CD8-positive, alpha-beta T cell (primary cell): ENCODE measurements at regions of chr17 and their contacts with region 1.

Region 1: GRCh38 chr17:43360739-43361505 is 37.9 kb upstream of the ARL4D start:
- DNase-seq: peak; percentile 80 to 98 (median 94)
- ATAC-seq: peak; percentile 76
- H3K4me3 ChIP-seq: peak overlapping the region; percentile 60 to 64
- H3K4me3 Mint-ChIP-seq: peak overlapping the region; percentile 86
- H3K27ac ChIP-seq: peak overlapping the region; percentile 92 to 100
- H3K27ac Mint-ChIP-seq: peak overlapping the region; percentile 100
- H3K4me1 ChIP-seq: peaks cover 13% of the 10 kb centered on the region
- H3K4me1 Mint-ChIP-seq: peaks cover 35% of the 10 kb centered on the region
- H3K27me3 ChIP-seq: no peaks in the 10 kb centered on the region
- H3K27me3 Mint-ChIP-seq: no peaks in the 10 kb centered on the region
- CTCF ChIP-seq: no peak

Region 2: DNA sequence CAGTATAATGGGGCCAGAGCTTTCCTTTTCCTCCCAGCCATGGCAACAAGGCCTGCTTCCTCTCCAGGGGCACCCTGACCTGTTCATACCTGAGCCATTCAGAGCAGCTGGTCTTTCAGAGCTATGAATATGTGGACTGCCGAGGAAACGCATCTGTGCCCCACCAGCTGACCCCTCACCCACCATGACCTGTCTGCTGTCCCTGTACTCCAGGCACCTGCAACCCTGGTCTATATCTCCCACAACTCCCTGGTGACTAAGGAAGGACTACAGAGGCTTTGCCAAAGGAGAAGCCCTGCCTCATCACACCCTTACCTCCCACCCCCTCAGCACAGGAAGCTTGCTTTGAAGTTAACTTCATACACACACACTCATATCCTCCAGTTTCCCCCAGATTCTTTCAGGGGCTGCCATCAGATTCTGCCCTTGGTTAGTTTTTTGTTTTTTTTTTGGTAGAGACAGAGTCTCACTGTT is 143.3 kb before region 1 on chr17:
- CTCF ChIA-PET with region 1: no interaction called
- POLR2A ChIA-PET with region 1: interaction called, 16 read pairs
- intact Hi-C with region 1: no loop called
- DNase-seq: peak in 3 of 9 experiments; percentile 10 to 30 (median 27)
- ATAC-seq: peak; percentile 80
- H3K4me3 ChIP-seq: no peak overlapping the region
- H3K4me3 Mint-ChIP-seq: no peak overlapping the region
- H3K27ac ChIP-seq: peak overlapping the region in 1 of 2 experiments; percentile 14
- H3K27ac Mint-ChIP-seq: peak overlapping the region; percentile 87
- H3K4me1 ChIP-seq: peaks cover 25% of the 10 kb centered on the region
- H3K4me1 Mint-ChIP-seq: peaks cover 40% of the 10 kb centered on the region
- H3K27me3 ChIP-seq: no peaks in the 10 kb centered on the region
- H3K27me3 Mint-ChIP-seq: no peaks in the 10 kb centered on the region
- CTCF ChIP-seq: no peak

Region 3: DNA sequence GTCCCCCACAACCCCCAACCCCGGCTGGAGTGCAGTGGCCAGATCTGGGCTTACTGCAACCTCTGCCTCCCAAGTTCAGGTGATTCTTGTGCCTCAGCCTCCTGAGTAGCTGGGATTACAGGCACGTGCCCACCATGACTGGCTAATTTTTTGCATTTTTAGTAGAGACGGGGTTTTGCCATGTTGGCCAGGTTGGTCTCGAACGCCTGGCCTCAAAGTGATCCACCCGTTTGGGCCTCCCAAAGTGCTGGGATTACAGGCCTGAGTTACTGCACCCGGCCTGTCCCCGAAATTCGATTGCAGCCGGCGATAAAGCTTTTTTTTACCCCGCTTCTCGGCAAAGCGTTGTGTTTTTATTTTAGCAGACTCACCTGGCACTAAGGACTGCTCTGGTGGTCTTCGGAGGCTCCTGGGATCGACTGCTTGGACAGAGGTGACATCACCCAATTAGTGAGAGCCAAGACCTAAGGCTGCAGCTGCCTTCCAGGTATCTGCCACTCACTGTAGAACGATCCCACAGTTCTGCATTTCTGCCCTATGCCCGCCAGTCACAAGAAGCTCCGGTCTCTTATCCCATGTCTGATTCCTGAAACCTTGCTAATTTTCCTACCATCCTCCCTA is 44.3 kb before region 1 on chr17:
- CTCF ChIA-PET with region 1: no interaction called
- POLR2A ChIA-PET with region 1: interaction called, 126 read pairs
- intact Hi-C with region 1: loop called in 1 of 2 experiments (anchors 1 kb)
- DNase-seq: peak in 5 of 9 experiments; percentile 14 to 59 (median 49)
- ATAC-seq: no peak
- H3K4me3 ChIP-seq: no peak overlapping the region
- H3K4me3 Mint-ChIP-seq: peak overlapping the region; percentile 6
- H3K27ac ChIP-seq: no peak overlapping the region
- H3K27ac Mint-ChIP-seq: peak overlapping the region; percentile 41
- H3K4me1 ChIP-seq: no peaks in the 10 kb centered on the region
- H3K4me1 Mint-ChIP-seq: peaks cover 15% of the 10 kb centered on the region
- H3K27me3 ChIP-seq: no peaks in the 10 kb centered on the region
- H3K27me3 Mint-ChIP-seq: no peaks in the 10 kb centered on the region
- CTCF ChIP-seq: no peak

Region 4: DNA sequence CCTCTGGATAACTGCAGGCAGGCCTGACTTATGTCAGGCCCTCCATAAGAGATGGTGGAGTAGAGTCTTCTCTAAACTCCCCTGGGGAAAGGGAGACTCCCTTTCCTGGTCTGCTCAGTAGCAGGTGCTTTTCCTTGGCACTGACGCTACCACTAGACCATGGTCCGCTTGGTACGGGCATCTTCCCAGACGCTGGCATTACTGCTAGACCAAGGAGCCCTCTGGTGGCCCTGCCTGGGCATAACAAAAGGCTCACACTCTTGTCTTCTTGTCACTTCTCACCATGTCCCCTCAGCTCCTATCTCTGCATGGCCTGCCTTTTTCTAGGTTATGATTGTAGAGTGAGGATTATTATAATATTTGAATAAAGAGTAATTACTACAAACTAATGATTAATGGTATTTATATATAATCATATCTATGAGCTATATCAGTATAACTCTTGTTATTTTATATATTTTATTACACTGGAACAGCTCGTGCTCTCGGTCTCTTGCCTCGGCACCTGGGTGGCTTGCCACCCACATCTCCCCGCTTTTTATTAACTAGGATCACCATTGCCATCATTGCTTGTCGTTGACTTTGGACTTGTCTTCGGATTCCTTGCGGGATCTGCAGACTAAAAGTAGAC is 21.9 kb before region 1 on chr17:
- CTCF ChIA-PET with region 1: interaction called, 28 read pairs
- POLR2A ChIA-PET with region 1: interaction called, 12 read pairs
- intact Hi-C with region 1: no loop called
- DNase-seq: peak; percentile 32 to 78 (median 62)
- ATAC-seq: peak; percentile 36
- H3K4me3 ChIP-seq: no peak overlapping the region
- H3K4me3 Mint-ChIP-seq: no peak overlapping the region
- H3K27ac ChIP-seq: no peak overlapping the region
- H3K27ac Mint-ChIP-seq: no peak overlapping the region
- H3K4me1 ChIP-seq: peaks cover 6% of the 10 kb centered on the region
- H3K4me1 Mint-ChIP-seq: peaks cover 8% of the 10 kb centered on the region
- H3K27me3 ChIP-seq: no peaks in the 10 kb centered on the region
- H3K27me3 Mint-ChIP-seq: no peaks in the 10 kb centered on the region
- CTCF ChIP-seq: peak; percentile 69

Region 5: GRCh38 chr17:43393944-43394482 is 33.1 kb after region 1 on chr17:
- CTCF ChIA-PET with region 1: interaction called, 17 read pairs
- POLR2A ChIA-PET with region 1: interaction called, 208 read pairs
- intact Hi-C with region 1: loop called (anchors 1 kb)
- DNase-seq: peak; percentile 78 to 93 (median 88)
- ATAC-seq: peak; percentile 28
- H3K4me3 ChIP-seq: no peak overlapping the region
- H3K4me3 Mint-ChIP-seq: no peak overlapping the region
- H3K27ac ChIP-seq: no peak overlapping the region
- H3K27ac Mint-ChIP-seq: peak overlapping the region; percentile 11
- H3K4me1 ChIP-seq: peaks cover 21% of the 10 kb centered on the region
- H3K4me1 Mint-ChIP-seq: peaks cover 24% of the 10 kb centered on the region
- H3K27me3 ChIP-seq: no peaks in the 10 kb centered on the region
- H3K27me3 Mint-ChIP-seq: no peaks in the 10 kb centered on the region
- CTCF ChIP-seq: peak; percentile 88